OCI-LY7 (cell line): ENCODE measurements at regions of chr7 and their contacts with region 1.

Region 1: DNA sequence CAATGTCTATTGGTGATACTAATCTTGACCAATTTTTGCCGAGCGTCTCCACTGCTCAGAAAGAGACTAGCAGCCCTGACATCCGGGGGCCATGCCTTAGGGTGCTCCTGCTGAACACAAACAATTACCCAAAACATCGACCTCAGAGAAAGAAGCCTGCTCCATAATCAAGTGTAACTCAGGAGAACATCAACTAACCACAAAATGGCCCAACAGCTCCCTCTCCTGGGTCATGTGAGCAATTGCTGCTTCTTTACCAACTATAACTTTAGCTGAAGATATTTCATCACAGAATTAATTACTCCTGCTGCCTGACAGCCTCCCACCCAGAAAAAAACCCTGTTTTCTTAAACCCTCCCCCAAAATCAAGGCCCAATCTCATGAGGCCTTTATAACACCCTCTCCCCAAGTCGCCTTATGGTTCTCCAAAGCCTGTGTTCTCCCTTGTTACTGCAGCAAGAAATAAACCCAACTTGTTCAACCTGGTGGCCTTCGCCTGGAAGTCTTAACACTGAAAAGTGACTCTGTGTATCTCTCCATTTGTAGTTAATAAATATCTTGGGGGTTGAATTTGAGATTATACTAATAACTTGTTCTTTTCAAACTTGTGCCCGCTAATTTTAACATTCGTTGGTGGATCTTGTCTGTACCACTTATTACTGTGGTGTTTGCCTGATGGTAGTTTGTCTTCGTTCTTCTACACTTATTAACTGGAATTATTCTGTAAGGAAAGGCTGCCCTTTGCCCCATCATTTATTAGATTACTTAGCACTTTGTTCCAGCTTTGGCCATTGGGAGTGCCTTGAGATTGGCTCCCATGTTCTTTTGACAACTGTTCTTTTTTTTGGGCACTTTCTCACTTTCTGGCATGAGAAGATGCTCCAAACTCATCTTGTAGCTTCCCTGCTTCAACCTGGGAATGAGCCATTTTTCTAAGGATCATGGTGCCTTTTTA is 21.2 kb upstream of the RAMP3 start:
- DNase-seq: peak; percentile 84
- H3K4me3 ChIP-seq: no peak overlapping the region
- H3K27ac ChIP-seq: no peak overlapping the region
- H3K4me1 ChIP-seq: peaks cover 18% of the 10 kb centered on the region
- CTCF ChIP-seq: peak; percentile 98

Region 2: GRCh38 chr7:44858161-44858560 is 278.2 kb before region 1 on chr7:
- CTCF ChIA-PET with region 1: interaction called, 4 read pairs
- POLR2A ChIA-PET with region 1: interaction called, 3 read pairs
- intact Hi-C with region 1: loop called (anchors 10 kb)
- DNase-seq: peak; percentile 31
- H3K4me3 ChIP-seq: no peak overlapping the region
- H3K27ac ChIP-seq: no peak overlapping the region
- H3K4me1 ChIP-seq: peaks cover 3% of the 10 kb centered on the region
- CTCF ChIP-seq: peak; percentile 55

Region 3: GRCh38 chr7:44973610-44974401 is 162.6 kb before region 1 on chr7:
- CTCF ChIA-PET with region 1: interaction called, 9 read pairs
- POLR2A ChIA-PET with region 1: interaction called, 16 read pairs
- intact Hi-C with region 1: loop called (anchors 1 kb)
- DNase-seq: peak; percentile 55
- H3K4me3 ChIP-seq: no peak overlapping the region
- H3K27ac ChIP-seq: no peak overlapping the region
- H3K4me1 ChIP-seq: peaks cover 32% of the 10 kb centered on the region
- CTCF ChIP-seq: peak; percentile 79

Region 4: GRCh38 chr7:45088821-45089340 is 47.5 kb before region 1 on chr7 and contains the start of gene NACAD:
- CTCF ChIA-PET with region 1: no interaction called
- POLR2A ChIA-PET with region 1: no interaction called
- intact Hi-C with region 1: no loop called
- DNase-seq: no peak
- H3K4me3 ChIP-seq: no peak within 1 kb of the TSS
- H3K27ac ChIP-seq: no peak within 1 kb of the TSS
- H3K4me1 ChIP-seq: no peaks in the 10 kb centered on the region
- CTCF ChIP-seq: no peak
- total RNA-seq, gene NACAD: not detected in 2 replicates

Region 5: DNA sequence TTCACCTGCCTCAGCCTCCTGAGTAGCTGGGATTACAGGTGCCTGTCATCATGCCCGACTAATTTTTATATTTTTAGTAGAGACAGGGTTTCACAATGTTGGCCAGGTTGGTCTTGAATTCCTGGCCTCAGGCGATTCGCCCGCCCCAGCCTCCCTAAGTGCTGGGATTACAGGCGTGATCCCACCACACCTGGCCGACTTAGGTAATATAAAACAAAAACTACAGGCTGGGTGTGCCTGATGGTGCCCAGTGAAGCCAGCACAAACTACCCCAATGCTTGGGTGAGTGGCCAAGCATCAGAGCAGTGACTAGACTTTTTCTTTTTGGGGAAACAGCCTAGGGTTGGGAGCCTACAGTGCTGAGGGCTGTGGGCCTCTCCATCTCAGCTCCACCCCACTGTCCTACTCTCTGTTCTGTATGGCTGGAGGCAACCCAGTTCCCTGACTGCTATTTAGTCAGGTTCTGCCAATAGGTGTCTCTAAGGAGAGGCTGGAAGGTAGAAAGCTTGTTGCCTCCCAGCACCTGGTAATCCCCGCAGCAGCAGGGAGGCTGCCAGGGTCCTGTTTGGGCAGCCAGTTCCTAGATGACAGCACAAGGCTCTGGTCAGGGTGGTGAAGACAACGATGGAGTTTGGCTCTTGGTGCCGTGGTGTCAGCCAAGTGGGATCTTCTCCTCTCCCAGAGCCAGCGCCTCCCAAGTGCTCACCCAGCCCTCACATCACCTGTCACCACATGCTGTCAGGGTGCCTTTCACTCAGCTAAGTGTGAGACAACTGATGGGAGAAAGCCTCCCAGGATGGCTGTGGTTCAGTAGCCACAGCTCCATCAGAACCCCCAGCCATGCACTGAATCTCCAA is 37.2 kb before region 1 on chr7:
- CTCF ChIA-PET with region 1: no interaction called
- POLR2A ChIA-PET with region 1: no interaction called
- intact Hi-C with region 1: loop called (anchors 5 kb)
- DNase-seq: no peak
- H3K4me3 ChIP-seq: no peak overlapping the region
- H3K27ac ChIP-seq: no peak overlapping the region
- H3K4me1 ChIP-seq: no peaks in the 10 kb centered on the region
- CTCF ChIP-seq: no peak

Region 6: DNA sequence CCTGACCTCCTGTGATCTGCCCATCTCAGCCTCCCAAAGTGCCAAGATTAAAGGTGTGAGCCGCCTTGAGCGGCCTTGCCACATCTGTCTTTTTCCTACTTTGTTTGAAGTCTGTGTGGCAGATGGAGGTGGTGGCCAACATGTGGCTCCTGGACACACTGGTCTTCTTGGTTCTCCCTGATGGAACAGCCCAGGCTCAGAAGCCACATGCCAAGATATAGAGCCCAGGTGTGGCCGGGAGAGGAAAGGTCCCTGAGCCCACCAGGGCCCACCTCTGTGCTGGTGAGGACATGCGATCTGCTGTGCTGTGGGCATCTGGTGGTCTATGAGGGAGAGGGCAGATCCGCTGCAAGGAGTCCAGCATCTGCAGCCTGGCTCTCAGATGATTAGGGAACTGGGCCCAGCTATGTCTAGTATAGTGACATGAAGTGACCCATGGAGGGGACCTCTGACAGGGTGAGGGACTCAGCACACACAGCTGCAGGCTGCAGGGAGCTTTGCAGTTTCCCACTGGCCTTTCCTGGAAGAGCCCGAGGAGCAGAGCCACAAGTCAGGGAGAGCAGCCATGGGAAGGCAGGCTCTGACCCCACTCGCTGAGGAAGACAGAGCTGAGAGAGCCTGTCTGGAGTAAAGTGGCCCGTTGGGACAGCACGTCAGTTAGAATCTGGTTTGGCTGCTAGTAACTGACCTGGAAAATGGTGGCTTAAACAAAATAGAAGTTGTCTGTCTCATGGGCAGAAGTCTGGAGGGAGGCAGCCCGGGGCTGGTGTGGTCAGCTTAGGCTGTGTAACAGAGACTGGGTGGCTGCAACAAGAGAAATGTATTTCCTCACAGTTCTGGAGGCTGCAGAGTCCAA is 463.7 kb after region 1 on chr7:
- CTCF ChIA-PET with region 1: no interaction called
- POLR2A ChIA-PET with region 1: no interaction called
- intact Hi-C with region 1: no loop called
- DNase-seq: no peak
- H3K4me3 ChIP-seq: no peak overlapping the region
- H3K27ac ChIP-seq: no peak overlapping the region
- H3K4me1 ChIP-seq: no peaks in the 10 kb centered on the region
- CTCF ChIP-seq: no peak